Right cardiac atrium (tissue), 5 donors: ENCODE measurements at regions of chr2 and their contacts with region 1.

Region 1: GRCh38 chr2:11389551-11390528 is 45.4 kb upstream of the ROCK2 start:
- DNase-seq: no peak
- ATAC-seq: peak in 1 of 2 donors; percentile 24
- H3K4me3 ChIP-seq: no peak overlapping the region
- H3K27ac ChIP-seq: no peak overlapping the region
- H3K4me1 ChIP-seq: peaks cover 11% of the 10 kb centered on the region
- H3K27me3 ChIP-seq: no peaks in the 10 kb centered on the region

Region 2: GRCh38 chr2:11344342-11344955 is 45.4 kb before region 1 on chr2 and contains the start of gene ROCK2:
- intact Hi-C with region 1: loop called in 2 of 4 experiments (anchors 10 kb)
- DNase-seq: peak; percentile 88 to 96 (median 95)
- ATAC-seq: peak; percentile 80 to 88
- H3K4me3 ChIP-seq: peak within 1 kb of the TSS; percentile 98
- H3K27ac ChIP-seq: peak within 1 kb of the TSS; percentile 100
- H3K4me1 ChIP-seq: no peaks in the 10 kb centered on the region
- H3K27me3 ChIP-seq: no peaks in the 10 kb centered on the region
- total RNA-seq, gene ROCK2: 40.2 to 60.7 (median 40.9) TPM